Activated CD4-positive, alpha-beta T cell treated with anti-CD3 and anti-CD28 coated beads for 36 hours (primary cell): ENCODE measurements at regions of chr2 and their contacts with region 1.

Region 1: GRCh38 chr2:46816831-46817726 is 98.5 kb downstream of the MCFD2 start:
- DNase-seq: no peak
- ATAC-seq: no peak
- H3K4me3 Mint-ChIP-seq: no peak overlapping the region
- H3K27ac Mint-ChIP-seq: no peak overlapping the region
- H3K4me1 Mint-ChIP-seq: no peaks in the 10 kb centered on the region
- H3K27me3 Mint-ChIP-seq: peaks cover 7% of the 10 kb centered on the region

Region 2: GRCh38 chr2:46836295-46837111 is 19.4 kb after region 1 on chr2:
- CTCF ChIA-PET with region 1: no interaction called
- POLR2A ChIA-PET with region 1: interaction called, 10 read pairs
- intact Hi-C with region 1: no loop called
- DNase-seq: no peak
- ATAC-seq: no peak
- H3K4me3 Mint-ChIP-seq: no peak overlapping the region
- H3K27ac Mint-ChIP-seq: no peak overlapping the region
- H3K4me1 Mint-ChIP-seq: no peaks in the 10 kb centered on the region
- H3K27me3 Mint-ChIP-seq: peaks cover 2% of the 10 kb centered on the region